Mammary epithelial cell (primary cell): ENCODE measurements at regions of chr4 and their contacts with region 1.

Region 1: DNA sequence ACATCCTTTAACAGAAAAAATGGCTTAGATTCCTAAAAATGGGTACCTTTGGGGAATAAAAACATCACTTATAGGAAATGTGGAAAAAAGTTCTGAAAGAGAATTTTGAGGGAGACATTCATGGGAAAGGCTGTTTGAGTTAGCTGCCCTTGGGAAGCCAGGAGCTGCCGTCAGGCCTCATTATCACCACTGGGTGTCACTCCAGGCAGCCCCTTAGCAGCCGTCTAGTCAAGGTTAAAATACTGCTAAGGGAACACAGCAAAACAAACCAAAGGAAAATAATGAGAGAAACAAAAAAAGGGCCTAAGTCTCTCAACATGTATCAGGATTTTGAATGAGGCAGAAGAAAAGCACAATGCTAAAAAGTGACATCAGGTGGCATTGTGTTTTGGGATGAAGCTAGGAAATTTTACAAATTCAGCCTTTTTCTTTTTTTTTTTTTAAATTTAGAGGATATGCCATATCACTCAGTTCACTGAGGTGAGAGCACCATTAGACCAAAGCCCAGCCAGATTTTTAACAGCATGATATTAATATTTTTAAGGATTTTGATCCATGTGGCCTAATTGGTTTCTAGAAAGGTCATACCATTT is 235.3 kb downstream of the GPAT3 start:
- DNase-seq: peak; percentile 25
- H3K4me3 ChIP-seq: no peak overlapping the region
- H3K27ac ChIP-seq: no peak overlapping the region
- H3K4me1 ChIP-seq: no peaks in the 10 kb centered on the region
- H3K27me3 ChIP-seq: peaks cover 2% of the 10 kb centered on the region
- CTCF ChIP-seq: peak; percentile 74 to 80

Region 2: DNA sequence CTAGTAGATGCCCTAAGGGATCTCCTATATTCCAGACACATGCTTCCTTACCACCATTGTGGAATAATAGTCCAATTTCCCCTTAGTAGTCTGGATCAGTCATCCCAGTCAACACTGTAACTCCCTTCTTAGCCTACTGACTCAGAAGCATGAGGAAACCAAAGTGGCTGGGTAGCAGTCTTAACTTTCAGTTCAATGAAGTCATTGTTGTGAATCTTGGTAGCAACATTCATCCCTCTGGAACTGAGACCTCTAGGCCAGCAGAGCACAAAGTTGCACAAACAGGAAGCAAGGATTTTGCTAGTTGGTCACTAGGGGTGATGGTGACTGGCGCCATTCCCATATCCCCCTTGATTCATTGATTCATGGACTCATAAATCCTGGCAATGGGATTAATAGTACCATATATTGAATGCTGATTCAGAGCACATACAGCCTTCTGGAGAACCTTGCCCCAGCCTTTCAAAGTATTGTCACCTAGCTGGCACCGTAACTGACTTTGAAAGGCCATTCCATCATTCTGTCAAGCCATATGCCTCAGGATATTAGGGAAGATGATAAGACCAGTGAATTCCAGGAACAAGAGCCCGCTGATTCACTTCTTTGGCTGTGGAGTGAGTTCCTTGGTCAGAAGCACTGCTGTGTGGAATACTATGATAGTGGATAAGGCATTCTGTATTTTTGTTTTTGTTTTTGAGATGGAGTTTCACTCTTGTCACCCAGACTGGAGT is 255.0 kb before region 1 on chr4:
- CTCF ChIA-PET with region 1: no interaction called
- dilution Hi-C with region 1: no loop called
- in situ Hi-C with region 1: loop called in 1 of 2 experiments (anchors 25 kb)
- intact Hi-C with region 1: no loop called
- DNase-seq: peak; percentile 93
- H3K4me3 ChIP-seq: no peak overlapping the region
- H3K27ac ChIP-seq: no peak overlapping the region
- H3K4me1 ChIP-seq: peaks cover 4% of the 10 kb centered on the region
- H3K27me3 ChIP-seq: no peaks in the 10 kb centered on the region
- CTCF ChIP-seq: no peak

Region 3: DNA sequence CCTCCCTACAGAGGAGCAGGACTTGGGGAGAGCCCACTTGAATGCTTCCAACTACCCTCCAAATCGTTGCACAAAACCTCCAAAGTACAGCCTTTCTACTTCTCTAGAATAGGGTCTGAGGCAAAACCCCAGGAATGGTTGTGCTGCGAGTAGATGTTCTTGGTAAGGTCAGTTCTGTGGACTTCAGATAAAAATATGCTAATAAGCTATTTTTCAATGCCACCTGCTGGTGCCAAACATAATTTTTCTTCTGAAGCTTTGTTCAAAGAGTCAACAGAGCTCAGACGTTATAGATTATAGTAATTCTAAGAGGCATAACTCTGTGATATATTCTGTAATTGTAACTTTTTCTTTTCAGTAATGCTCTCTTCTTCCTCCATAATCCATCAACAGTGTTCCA is 190.4 kb after region 1 on chr4:
- CTCF ChIA-PET with region 1: interaction called, 20 read pairs
- dilution Hi-C with region 1: no loop called
- in situ Hi-C with region 1: no loop called
- intact Hi-C with region 1: loop called (anchors 2 kb)
- DNase-seq: no peak
- H3K4me3 ChIP-seq: no peak overlapping the region
- H3K27ac ChIP-seq: no peak overlapping the region
- H3K4me1 ChIP-seq: no peaks in the 10 kb centered on the region
- H3K27me3 ChIP-seq: peaks cover 2% of the 10 kb centered on the region
- CTCF ChIP-seq: peak; percentile 4 to 39

Region 4: DNA sequence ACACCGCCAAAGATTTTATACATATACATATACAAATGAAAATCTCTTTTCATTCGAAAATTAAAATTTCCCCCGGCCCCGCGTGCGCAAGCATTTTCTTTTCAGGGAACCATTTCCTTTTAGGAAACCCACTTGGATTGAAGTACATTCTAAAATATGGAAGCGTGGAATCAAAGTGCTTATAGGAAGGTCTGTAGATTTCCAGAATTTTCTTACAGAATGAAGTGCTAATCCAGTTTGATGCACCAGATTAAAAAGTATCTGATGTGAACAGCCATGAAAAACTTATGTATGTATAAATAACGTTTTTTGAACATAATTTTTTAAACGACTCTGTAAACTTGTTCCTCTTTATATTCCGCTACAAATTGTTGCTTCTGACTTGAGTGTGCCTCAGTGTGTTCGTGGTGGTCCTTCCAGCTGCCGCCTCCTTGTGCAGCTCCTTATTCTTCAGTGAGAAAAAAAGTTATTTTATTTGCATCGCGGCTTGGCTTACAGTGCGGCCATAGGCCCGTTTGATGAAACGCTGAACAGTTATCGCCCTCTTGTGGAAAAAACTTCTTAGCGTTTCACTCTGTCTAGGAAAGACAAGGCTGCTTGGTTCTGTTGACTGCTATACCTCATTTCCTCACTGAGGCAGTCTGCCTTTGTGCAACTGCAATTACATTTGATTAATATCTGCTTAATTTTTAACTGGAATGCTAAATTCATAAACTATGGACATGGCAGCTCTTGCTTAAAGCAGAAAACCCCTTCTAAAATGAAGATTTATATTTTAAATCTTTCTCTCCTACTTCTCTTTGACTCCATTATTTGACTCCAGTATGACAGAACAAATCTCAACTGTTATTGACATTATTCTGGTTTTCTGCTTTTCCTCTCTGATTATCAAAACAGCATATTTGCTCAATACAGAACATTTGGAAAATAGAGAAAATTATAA is 732.6 kb after region 1 on chr4:
- CTCF ChIA-PET with region 1: no interaction called
- dilution Hi-C with region 1: no loop called
- in situ Hi-C with region 1: loop called in 1 of 2 experiments (anchors 25 kb)
- intact Hi-C with region 1: loop called (anchors 2 kb)
- DNase-seq: peak; percentile 52
- H3K4me3 ChIP-seq: no peak overlapping the region
- H3K27ac ChIP-seq: no peak overlapping the region
- H3K4me1 ChIP-seq: peaks cover 9% of the 10 kb centered on the region
- H3K27me3 ChIP-seq: peaks cover 44% of the 10 kb centered on the region
- CTCF ChIP-seq: peak; percentile 75 to 82